ENCODE measurements at regions of chr16 and their contacts with region 1.

Region 1: DNA sequence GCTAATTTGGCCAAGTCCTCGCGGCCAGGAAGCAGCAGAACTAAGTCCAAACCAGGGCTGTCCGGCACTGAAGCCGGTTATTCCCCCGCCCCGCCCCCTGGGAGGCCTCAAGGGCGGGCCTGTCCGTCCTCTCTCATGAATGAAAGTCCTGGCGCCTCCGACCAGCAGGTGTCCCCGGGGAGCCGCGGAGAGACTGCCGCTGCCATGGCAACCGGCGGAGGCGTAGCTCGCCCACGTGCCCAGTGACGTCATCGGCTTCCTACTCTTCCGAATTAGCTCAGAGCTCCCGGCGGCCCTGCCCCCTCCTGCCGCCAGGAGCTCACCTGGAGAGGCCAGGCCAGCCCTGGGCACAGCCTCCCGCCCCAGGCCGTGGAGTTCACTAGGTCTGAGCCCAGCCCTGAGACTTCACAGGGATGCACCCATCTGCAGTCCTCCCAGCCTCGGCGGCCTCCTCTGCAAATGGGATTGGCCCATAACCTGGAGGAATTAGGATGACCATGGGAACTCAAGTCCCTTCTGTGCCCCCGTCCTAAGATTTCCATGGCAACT is 1.3 kb downstream of the SPATA2L start:
- DNase-seq: peak; percentile 96
- H3K4me3 Mint-ChIP-seq: peak overlapping the region; percentile 64
- H3K27ac Mint-ChIP-seq: peak overlapping the region; percentile 58
- H3K4me1 Mint-ChIP-seq: peaks cover 37% of the 10 kb centered on the region
- H3K27me3 Mint-ChIP-seq: no peaks in the 10 kb centered on the region

Region 2: GRCh38 chr16:89495121-89495520 is 205.1 kb before region 1 on chr16:
- CTCF ChIA-PET with region 1: no interaction called
- POLR2A ChIA-PET with region 1: no interaction called
- DNase-seq: no peak
- H3K4me3 Mint-ChIP-seq: no peak overlapping the region
- H3K27ac Mint-ChIP-seq: no peak overlapping the region
- H3K4me1 Mint-ChIP-seq: peaks cover 21% of the 10 kb centered on the region
- H3K27me3 Mint-ChIP-seq: no peaks in the 10 kb centered on the region

Region 3: DNA sequence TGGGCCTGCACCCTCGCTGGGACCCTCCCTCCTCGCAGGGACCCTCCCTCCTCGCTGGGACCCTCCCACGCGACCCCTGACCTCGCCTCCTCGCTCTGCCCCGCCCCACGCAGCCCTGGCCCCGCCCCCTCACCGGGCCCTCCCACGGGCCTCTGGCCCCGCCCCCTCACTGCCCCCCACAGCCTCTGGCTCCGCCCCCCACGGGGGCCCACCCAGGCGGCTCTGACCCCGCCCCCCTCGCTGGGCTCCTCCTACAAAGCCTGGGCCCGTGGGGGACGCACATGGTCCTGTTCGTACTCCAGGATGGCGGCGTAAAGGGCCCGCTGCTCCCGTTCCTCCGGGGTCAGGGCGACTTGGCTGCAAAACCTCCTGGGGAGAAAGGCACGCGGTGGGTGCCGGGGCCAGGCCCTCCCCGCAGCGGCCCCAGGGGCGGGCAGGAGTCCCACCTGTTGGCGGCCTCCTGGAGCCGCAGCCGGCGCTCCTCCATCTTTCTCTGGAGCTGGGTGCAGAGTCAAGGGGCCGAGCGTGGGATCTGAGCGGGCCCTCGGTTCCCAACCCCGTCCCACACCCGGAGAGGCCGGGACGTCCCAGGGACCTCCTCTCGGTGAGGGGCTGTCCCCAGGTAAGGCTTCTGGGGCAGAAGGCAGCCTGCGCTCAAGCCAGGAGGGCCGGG is 11.6 kb after region 1 on chr16:
- CTCF ChIA-PET with region 1: interaction called, 12 read pairs
- POLR2A ChIA-PET with region 1: interaction called, 30 read pairs
- DNase-seq: peak; percentile 78
- H3K4me3 Mint-ChIP-seq: peak overlapping the region; percentile 67
- H3K27ac Mint-ChIP-seq: no peak overlapping the region
- H3K4me1 Mint-ChIP-seq: peaks cover 8% of the 10 kb centered on the region
- H3K27me3 Mint-ChIP-seq: no peaks in the 10 kb centered on the region

Region 4: DNA sequence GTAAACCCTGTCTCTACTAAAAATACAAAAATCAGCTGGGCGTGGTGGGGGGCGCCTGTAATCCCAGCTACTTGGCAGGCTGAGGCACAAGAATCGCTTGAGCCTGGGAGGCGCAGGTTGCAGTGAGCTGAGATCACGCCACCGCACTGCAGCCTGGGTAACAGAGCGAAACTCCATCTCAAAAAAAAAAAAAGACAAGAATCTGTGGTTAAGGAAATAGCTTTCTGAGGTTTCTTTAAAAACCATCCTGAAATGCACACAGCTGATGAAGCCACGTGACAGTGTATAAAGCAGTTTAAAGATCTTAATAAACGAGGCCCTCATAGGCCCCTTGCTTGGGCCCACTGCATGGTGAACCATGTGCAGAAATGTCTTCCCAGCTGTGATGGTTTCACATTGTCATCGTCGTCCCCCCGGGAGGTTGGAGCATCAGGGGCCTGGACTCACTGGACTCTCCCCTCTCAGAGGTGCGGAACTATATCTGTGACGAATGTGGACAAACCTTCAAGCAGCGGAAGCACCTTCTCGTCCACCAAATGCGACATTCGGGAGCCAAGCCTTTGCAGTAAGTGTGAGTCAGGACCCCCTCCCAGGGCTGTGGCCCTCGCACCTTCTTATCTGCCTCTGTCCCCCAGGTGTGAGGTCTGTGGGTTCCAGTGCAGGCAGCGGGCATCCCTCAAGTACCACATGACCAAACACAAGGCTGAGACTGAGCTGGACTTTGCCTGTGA is 37.3 kb after region 1 on chr16:
- CTCF ChIA-PET with region 1: interaction called, 32 read pairs
- POLR2A ChIA-PET with region 1: interaction called, 11 read pairs
- DNase-seq: peak; percentile 70
- H3K4me3 Mint-ChIP-seq: peak overlapping the region; percentile 32
- H3K27ac Mint-ChIP-seq: peak overlapping the region; percentile 78
- H3K4me1 Mint-ChIP-seq: peaks cover 30% of the 10 kb centered on the region
- H3K27me3 Mint-ChIP-seq: no peaks in the 10 kb centered on the region

Region 5: GRCh38 chr16:89795676-89796075 is 95.5 kb after region 1 on chr16:
- CTCF ChIA-PET with region 1: interaction called, 57 read pairs
- POLR2A ChIA-PET with region 1: no interaction called
- DNase-seq: no peak
- H3K4me3 Mint-ChIP-seq: no peak overlapping the region
- H3K27ac Mint-ChIP-seq: no peak overlapping the region
- H3K4me1 Mint-ChIP-seq: peaks cover 4% of the 10 kb centered on the region
- H3K27me3 Mint-ChIP-seq: no peaks in the 10 kb centered on the region

Region 6: DNA sequence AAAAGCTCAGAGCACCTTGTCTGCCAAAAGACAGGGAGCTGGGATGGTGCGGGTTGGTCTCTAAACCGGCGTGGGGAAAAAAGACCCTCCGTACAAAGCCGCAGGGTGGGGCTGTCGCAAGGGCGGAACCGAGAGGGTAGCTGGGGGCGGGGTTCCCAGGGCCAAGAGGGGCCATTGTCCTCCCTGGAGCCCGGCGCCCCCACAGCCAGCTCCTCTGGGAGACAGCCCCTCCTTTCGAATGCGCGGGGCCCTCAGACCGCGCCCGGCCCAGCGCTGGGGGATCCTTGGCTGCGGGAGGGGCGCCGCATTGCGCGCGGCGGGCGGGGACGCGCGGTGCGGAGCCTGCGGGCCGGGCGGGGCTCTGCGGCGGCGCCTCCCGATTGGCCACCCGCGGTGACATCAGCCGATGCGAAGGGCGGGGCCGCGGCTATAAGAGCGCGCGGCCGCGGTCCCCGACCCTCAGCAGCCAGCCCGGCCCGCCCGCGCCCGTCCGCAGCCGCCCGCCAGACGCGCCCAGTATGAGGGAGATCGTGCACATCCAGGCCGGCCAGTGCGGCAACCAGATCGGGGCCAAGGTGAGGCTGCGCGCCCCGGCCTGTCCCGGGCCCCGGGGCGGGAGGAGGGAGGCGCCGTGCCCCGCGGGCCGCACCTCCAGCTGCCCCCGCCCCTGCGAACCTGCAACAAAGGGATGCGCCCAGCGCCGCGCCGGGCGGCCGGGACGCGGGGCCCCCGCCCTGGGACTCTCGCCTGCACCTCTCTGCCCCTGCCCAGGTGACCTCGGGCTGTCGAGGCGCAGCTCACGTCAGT is 222.9 kb after region 1 on chr16 and contains the start of gene TUBB3:
- CTCF ChIA-PET with region 1: no interaction called
- POLR2A ChIA-PET with region 1: no interaction called
- DNase-seq: peak; percentile 75
- H3K4me3 Mint-ChIP-seq: peak within 1 kb of the TSS; percentile 75
- H3K27ac Mint-ChIP-seq: peak within 1 kb of the TSS; percentile 70
- H3K4me1 Mint-ChIP-seq: peaks cover 52% of the 10 kb centered on the region
- H3K27me3 Mint-ChIP-seq: peaks cover 43% of the 10 kb centered on the region
- total RNA-seq, gene TUBB3: 3.6 to 4.0 TPM

Region 7: GRCh38 chr16:89999831-90000574 is 299.8 kb after region 1 on chr16:
- CTCF ChIA-PET with region 1: no interaction called
- POLR2A ChIA-PET with region 1: no interaction called
- DNase-seq: no peak
- H3K4me3 Mint-ChIP-seq: no peak overlapping the region
- H3K27ac Mint-ChIP-seq: no peak overlapping the region
- H3K4me1 Mint-ChIP-seq: peaks cover 3% of the 10 kb centered on the region
- H3K27me3 Mint-ChIP-seq: no peaks in the 10 kb centered on the region